ENCODE measurements at regions of chr5 and their contacts with region 1.

Region 1: DNA sequence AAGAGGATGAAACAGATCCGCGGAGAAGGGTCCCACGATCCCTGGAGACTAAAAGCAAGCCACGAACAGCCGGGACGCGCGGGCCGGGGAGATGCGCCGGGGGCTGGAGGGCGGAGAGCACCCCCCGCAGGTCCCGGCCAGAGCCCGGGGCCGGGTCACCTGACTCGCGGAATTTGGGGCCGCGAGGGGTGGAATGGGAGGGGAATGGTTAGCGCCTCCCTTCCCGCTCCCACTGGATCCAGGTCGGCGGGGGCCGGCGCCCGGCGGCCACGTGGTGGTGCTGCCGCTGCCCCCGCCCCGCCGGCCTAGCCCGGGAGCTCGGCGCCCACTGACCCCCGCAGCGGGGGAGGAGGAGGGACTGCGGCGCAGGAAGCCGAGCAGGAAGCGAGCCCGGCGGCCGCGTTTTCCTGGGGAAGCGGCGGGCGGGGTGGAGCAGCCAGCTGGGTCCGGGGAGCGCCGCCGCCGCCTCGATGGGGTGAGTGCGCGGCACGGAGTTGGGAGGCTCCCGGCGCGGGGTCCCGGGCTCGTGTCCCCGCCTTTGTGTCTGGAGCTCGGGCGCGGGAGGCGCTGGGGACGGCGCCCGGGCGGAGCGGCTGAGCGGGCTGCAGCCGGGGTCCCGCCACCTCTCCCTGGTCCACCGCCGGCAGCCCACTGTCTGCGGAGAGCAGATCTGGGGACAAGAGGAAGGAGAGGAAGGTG is at the start of gene RAI14:
- DNase-seq: peak; percentile 94
- H3K4me3 ChIP-seq: peak within 1 kb of the TSS; percentile 67 to 93 (median 82)
- H3K27ac ChIP-seq: peak within 1 kb of the TSS; percentile 94 to 98 (median 96)
- H3K4me1 ChIP-seq: peaks cover 0 to 33% (median 18%) of the 10 kb centered on the region in 4 donors
- H3K27me3 ChIP-seq: no peaks in the 10 kb centered on the region
- CTCF ChIP-seq: peak in 1 of 4 experiments; percentile 6
- EP300 ChIP-seq: no peak
- POLR2A ChIP-seq: peak in 1 of 2 donors; percentile 29
- total RNA-seq, gene RAI14: 23.4 to 89.5 (median 53.4) TPM

Region 2: DNA sequence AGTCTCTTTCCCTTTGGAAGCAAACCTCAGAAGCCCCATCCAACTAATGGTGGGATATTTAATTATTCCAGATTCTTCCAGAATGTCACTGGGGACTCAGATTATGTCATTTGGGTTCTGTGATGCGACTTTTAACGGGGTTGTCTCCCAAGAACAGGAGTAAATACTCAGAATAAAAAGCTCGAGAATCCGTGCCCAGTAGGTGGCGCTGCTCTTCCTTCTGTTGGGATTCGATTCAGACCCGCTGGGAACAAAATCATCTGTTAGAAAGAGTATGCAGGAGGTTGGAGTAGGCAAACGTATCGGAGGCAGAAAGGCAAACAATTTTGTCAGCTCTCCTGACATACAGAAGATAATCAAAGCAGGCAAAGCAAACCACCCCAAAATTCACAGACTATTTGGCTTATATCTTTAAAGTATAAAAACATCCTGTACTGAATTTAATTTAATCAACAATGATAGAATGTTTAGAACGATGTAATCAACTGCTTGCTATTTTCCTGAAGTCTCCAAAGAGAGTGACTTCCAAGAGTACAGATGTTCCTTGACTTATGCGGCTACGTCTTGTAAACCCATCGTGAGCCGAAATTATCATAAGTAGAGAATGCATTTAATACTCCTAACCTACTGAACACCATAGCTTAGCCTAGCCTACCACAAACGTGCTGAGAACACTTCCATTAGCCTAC is 169.8 kb before region 1 on chr5:
- intact Hi-C with region 1: loop called (anchors 2 kb)
- DNase-seq: peak; percentile 89
- H3K4me3 ChIP-seq: no peak overlapping the region
- H3K27ac ChIP-seq: peak overlapping the region; percentile 61 to 76 (median 73)
- H3K4me1 ChIP-seq: peaks cover 0 to 35% (median 26%) of the 10 kb centered on the region in 4 donors
- H3K27me3 ChIP-seq: no peaks in the 10 kb centered on the region
- CTCF ChIP-seq: peak; percentile 54 to 88 (median 84)
- EP300 ChIP-seq: no peak
- POLR2A ChIP-seq: no peak

Region 3: GRCh38 chr5:34533582-34534522 is 122.3 kb before region 1 on chr5:
- intact Hi-C with region 1: loop called (anchors 5 kb)
- DNase-seq: no peak
- H3K4me3 ChIP-seq: no peak overlapping the region
- H3K27ac ChIP-seq: peak overlapping the region; percentile 38 to 87 (median 63)
- H3K4me1 ChIP-seq: peaks cover 0 to 58% (median 48%) of the 10 kb centered on the region in 4 donors
- H3K27me3 ChIP-seq: no peaks in the 10 kb centered on the region
- CTCF ChIP-seq: no peak
- EP300 ChIP-seq: no peak
- POLR2A ChIP-seq: no peak

Region 4: GRCh38 chr5:34551911-34552433 is 104.2 kb before region 1 on chr5:
- intact Hi-C with region 1: loop called (anchors 10 kb)
- DNase-seq: peak; percentile 75
- H3K4me3 ChIP-seq: no peak overlapping the region
- H3K27ac ChIP-seq: peak overlapping the region; percentile 42 to 80 (median 72)
- H3K4me1 ChIP-seq: peaks cover 0 to 29% (median 17%) of the 10 kb centered on the region in 4 donors
- H3K27me3 ChIP-seq: no peaks in the 10 kb centered on the region
- CTCF ChIP-seq: no peak
- EP300 ChIP-seq: peak in 1 of 4 donors; percentile 68
- POLR2A ChIP-seq: no peak

Region 5: GRCh38 chr5:34609951-34610441 is 46.2 kb before region 1 on chr5:
- intact Hi-C with region 1: loop called (anchors 5 kb)
- DNase-seq: no peak
- H3K4me3 ChIP-seq: no peak overlapping the region
- H3K27ac ChIP-seq: peak overlapping the region in 2 of 4 donors; percentile 74 to 82
- H3K4me1 ChIP-seq: peaks cover 0 to 29% (median 14%) of the 10 kb centered on the region in 4 donors
- H3K27me3 ChIP-seq: no peaks in the 10 kb centered on the region
- CTCF ChIP-seq: no peak
- EP300 ChIP-seq: no peak
- POLR2A ChIP-seq: no peak

Region 6: DNA sequence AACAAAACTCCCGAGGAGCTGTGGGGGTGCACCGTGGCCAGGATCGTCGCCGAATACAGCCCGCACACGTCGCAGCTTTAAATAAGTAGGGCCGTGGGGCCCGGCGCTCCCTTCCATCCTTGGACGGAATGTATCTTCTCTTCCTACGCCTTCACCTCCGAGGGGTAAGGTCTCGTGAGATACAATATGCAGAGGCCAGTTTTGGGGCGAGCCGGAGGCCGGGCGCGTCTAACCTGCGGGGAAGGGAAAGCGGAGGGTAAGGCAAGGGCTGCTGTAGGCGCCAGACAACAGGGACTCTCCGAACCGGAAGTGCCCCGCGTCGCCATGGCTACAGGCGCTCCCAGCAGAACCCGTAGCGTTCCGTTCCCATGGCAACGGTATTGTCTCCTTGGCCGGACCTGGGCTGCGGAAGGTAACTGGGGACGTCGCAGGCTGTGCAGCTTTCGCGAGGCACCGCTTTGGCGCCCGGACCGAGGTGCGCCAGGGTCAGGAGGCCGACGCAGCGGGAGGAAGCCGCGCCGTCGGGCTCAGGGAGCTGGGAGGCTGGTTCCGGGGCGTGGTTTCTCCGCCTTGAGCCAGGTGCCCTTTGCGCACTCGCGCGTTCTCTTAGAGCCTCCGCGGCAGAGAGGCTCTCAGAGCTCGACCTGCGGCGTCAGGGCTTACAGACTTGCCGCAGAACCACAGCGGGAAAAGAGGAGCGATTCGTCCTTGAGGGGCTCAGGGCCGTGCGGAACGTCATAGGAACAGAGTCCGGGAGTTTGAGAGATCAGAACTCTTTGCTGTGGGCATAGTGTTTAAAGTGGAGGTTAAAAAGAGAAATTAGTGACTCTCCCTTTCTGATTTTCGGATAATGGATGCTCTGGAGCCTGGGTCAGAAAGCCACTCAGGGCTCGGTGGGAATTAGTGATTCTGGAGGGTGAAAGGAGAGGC is 182.9 kb after region 1 on chr5 and contains the start of gene TTC23L:
- intact Hi-C with region 1: loop called (anchors 2 kb)
- DNase-seq: peak; percentile 93
- H3K4me3 ChIP-seq: peak within 1 kb of the TSS; percentile 53 to 89 (median 76)
- H3K27ac ChIP-seq: peak within 1 kb of the TSS; percentile 66 to 73 (median 70)
- H3K4me1 ChIP-seq: peaks cover 0 to 11% (median 0%) of the 10 kb centered on the region in 4 donors
- H3K27me3 ChIP-seq: no peaks in the 10 kb centered on the region
- CTCF ChIP-seq: no peak
- EP300 ChIP-seq: no peak
- POLR2A ChIP-seq: peak in 1 of 2 donors; percentile 44
- total RNA-seq, gene TTC23L: 0.16 to 0.36 (median 0.28) TPM in 3 of 4 donors, not detected in the other

Region 7: DNA sequence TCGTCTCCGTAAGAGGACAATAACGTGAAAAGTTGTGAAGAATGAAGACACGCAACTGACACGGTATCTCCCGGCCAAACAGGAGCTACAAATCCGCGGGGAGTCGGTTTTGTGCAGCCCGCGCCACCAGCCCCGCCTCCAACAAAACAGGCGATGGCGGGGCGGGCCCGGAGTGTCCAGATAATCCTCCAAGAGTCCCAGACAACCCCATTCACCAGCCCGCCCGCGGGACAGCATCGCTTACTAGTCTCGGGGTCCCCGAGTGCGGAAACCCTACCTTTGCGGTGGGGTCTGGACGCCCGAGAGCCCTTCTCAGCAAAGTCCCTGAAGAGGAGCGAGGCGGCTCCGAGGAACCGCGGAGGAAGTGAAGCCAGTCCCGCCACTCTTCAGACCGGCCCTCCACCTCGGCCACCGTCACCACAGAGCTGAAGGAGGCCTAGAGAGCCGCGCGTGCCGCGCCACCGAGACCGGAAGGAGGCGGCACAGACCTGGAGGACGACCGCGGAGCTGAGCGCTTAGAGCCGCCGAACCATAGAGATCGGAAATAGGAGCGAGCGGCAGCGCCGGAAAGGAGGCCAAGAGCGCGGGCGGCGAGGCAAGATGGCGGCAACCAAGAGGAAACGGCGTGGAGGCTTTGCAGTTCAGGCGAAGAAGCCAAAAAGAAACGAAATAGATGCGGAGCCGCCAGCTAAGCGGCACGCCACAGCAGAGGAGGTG is 259.1 kb after region 1 on chr5 and contains the starts of genes BRIX1 and RAD1:
- intact Hi-C with region 1: loop called (anchors 5 kb)
- DNase-seq: peak; percentile 97
- H3K4me3 ChIP-seq: peak within 1 kb of the TSS; percentile 72 to 99 (median 85)
- H3K27ac ChIP-seq: peak within 1 kb of the TSS; percentile 87 to 93 (median 90)
- H3K4me1 ChIP-seq: peaks cover 0 to 43% (median 36%) of the 10 kb centered on the region in 4 donors
- H3K27me3 ChIP-seq: no peaks in the 10 kb centered on the region
- CTCF ChIP-seq: no peak
- EP300 ChIP-seq: no peak
- POLR2A ChIP-seq: peak; percentile 76 to 79
- total RNA-seq, gene BRIX1: 8.6 to 26.0 (median 20.3) TPM
- total RNA-seq, gene RAD1: 15.8 to 25.8 (median 20.0) TPM

Region 8: DNA sequence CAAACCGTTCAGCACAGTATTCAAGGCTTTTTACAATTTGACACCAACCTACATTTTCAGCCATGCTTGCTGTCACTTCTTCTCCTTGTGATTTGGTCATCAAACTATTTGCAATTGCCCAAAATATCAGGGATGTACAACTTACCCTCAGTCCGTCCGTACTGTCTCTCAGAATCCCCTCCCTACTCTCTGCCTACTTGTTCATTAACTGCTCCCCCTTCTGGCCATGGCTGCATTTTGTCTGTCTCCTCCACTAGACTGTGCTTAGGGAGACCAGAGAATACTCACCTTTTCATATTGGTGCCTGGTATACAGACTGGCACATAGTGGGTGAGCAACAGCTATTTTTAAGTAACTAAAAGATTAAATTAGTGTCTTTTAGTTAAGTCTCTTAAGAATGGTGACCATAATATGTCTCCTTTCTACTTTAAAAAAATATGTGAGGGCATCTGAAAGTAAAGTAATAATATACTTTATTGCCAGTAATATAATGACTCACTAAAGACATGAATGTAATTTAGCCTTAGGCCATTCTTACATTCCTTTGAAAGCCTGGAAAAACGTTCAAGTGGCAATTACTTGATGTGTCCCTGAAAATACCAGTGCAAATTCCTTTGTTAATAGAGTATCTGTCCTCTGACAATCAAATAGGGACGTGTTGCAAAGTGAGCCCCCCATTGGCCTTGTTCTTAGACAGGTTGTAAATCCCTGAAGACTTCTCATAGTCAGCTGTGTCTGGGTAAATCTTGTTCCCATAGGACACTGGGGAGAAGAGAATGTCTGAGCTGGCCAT is 546.4 kb after region 1 on chr5:
- intact Hi-C with region 1: no loop called
- DNase-seq: no peak
- H3K4me3 ChIP-seq: no peak overlapping the region
- H3K27ac ChIP-seq: no peak overlapping the region
- H3K4me1 ChIP-seq: peaks cover 0 to 18% (median 12%) of the 10 kb centered on the region in 4 donors
- H3K27me3 ChIP-seq: no peaks in the 10 kb centered on the region
- CTCF ChIP-seq: peak in 1 of 4 experiments; percentile 11
- EP300 ChIP-seq: no peak
- POLR2A ChIP-seq: no peak